ENCODE measurements at regions of chr12 and their contacts with region 1.

Region 1: GRCh38 chr12:32743264-32743663 is 12.4 kb downstream of the YARS2 start:
- DNase-seq: no peak
- ATAC-seq: no peak
- H3K4me3 ChIP-seq: no peak overlapping the region
- H3K4me3 Mint-ChIP-seq: no peak overlapping the region
- H3K27ac ChIP-seq: no peak overlapping the region
- H3K27ac Mint-ChIP-seq: no peak overlapping the region
- H3K4me1 ChIP-seq: no peaks in the 10 kb centered on the region
- H3K4me1 Mint-ChIP-seq: peaks cover 12 to 22% (median 15%) of the 10 kb centered on the region in 3 donors
- H3K27me3 ChIP-seq: no peaks in the 10 kb centered on the region
- H3K27me3 Mint-ChIP-seq: no peaks in the 10 kb centered on the region

Region 2: GRCh38 chr12:32708926-32709325 is 34.3 kb before region 1 on chr12:
- CTCF ChIA-PET with region 1: no interaction called
- POLR2A ChIA-PET with region 1: no interaction called
- DNase-seq: no peak
- ATAC-seq: no peak
- H3K4me3 ChIP-seq: no peak overlapping the region
- H3K4me3 Mint-ChIP-seq: no peak overlapping the region
- H3K27ac ChIP-seq: no peak overlapping the region
- H3K27ac Mint-ChIP-seq: no peak overlapping the region
- H3K4me1 ChIP-seq: no peaks in the 10 kb centered on the region
- H3K4me1 Mint-ChIP-seq: peaks cover 0 to 6% (median 0%) of the 10 kb centered on the region in 3 donors
- H3K27me3 ChIP-seq: no peaks in the 10 kb centered on the region
- H3K27me3 Mint-ChIP-seq: no peaks in the 10 kb centered on the region

Region 3: GRCh38 chr12:34022079-34022830 is 1279.0 kb after region 1 on chr12 and contains the start of gene ALG10:
- CTCF ChIA-PET with region 1: interaction called in 1 of 2 experiments, 6 read pairs
- POLR2A ChIA-PET with region 1: interaction called in 1 of 2 experiments, 11 read pairs
- DNase-seq: peak; percentile 92 to 98 (median 96)
- ATAC-seq: peak; percentile 98 to 99 (median 98)
- H3K4me3 ChIP-seq: peak within 1 kb of the TSS; percentile 76 to 84
- H3K4me3 Mint-ChIP-seq: peak within 1 kb of the TSS; percentile 93 to 95 (median 94)
- H3K27ac ChIP-seq: peak within 1 kb of the TSS; percentile 95
- H3K27ac Mint-ChIP-seq: peak within 1 kb of the TSS; percentile 95 to 99
- H3K4me1 ChIP-seq: peaks cover 5 to 7% of the 10 kb centered on the region in 2 experiments
- H3K4me1 Mint-ChIP-seq: peaks cover 20 to 33% (median 23%) of the 10 kb centered on the region in 3 donors
- H3K27me3 ChIP-seq: no peaks in the 10 kb centered on the region
- H3K27me3 Mint-ChIP-seq: no peaks in the 10 kb centered on the region
- total RNA-seq, gene ALG10: 11.4 to 19.5 (median 15.7) TPM